MCF 10A (cell line): ENCODE measurements at regions of chr11 and their contacts with region 1.

Region 1: DNA sequence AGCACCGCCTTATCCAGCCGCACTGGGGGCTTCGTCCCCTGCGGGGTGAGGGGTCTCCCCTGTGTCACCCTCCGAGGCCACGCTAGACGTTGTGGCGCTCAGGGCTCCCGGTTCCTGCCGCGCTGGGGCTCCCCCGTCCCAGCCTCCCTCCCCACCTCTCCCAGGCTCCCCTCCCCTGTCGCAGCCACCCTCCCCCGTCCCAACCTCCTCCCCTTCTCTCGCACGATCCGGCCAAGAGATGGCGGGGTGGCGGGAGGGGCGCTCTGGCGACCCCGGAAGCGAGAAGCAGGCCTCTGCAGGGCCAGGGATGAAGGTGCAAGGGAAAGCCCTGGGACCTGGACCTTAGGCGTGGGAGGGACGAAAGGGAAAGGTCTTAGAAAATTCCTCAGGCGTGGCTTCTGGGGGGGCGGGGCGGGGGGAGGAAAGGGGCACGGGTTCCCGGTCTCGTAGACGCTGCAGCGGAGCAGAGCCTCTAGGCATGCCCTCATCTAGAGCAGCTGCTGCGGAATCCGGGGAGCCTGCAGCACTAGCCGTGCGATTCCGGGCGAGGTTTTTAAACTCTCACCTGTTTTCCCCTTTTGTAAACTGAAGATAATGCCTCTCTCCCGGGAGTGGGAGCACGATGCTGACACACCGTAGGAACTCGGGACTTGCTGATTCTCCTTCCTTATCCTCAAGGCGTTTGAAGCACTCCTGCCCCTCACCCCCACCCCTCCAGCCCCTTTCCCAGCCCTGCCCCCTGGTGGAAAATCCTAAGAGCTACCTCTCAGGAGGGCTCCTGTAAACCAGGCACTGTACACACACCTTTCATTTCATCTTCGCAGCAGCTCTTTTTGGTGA is 14.4 kb downstream of the KCNJ5 start:
- DNase-seq: peak; percentile 71
- H3K4me3 Mint-ChIP-seq: peak overlapping the region; percentile 72
- H3K27ac Mint-ChIP-seq: peak overlapping the region; percentile 57
- H3K4me1 Mint-ChIP-seq: peaks cover 48% of the 10 kb centered on the region
- H3K27me3 Mint-ChIP-seq: no peaks in the 10 kb centered on the region
- CTCF ChIP-seq: peak; percentile 43

Region 2: GRCh38 chr11:128802358-128802981 is 103.1 kb before region 1 on chr11:
- CTCF ChIA-PET with region 1: no interaction called
- POLR2A ChIA-PET with region 1: no interaction called
- intact Hi-C with region 1: no loop called
- DNase-seq: peak; percentile 30
- H3K4me3 Mint-ChIP-seq: no peak overlapping the region
- H3K27ac Mint-ChIP-seq: no peak overlapping the region
- H3K4me1 Mint-ChIP-seq: peaks cover 6% of the 10 kb centered on the region
- H3K27me3 Mint-ChIP-seq: no peaks in the 10 kb centered on the region
- CTCF ChIP-seq: peak; percentile 25

Region 3: GRCh38 chr11:128893578-128894285 is 11.8 kb before region 1 on chr11:
- CTCF ChIA-PET with region 1: interaction called, 54 read pairs
- POLR2A ChIA-PET with region 1: interaction called, 16 read pairs
- intact Hi-C with region 1: no loop called
- DNase-seq: no peak
- H3K4me3 Mint-ChIP-seq: no peak overlapping the region
- H3K27ac Mint-ChIP-seq: no peak overlapping the region
- H3K4me1 Mint-ChIP-seq: peaks cover 15% of the 10 kb centered on the region
- H3K27me3 Mint-ChIP-seq: no peaks in the 10 kb centered on the region
- CTCF ChIP-seq: no peak

Region 4: DNA sequence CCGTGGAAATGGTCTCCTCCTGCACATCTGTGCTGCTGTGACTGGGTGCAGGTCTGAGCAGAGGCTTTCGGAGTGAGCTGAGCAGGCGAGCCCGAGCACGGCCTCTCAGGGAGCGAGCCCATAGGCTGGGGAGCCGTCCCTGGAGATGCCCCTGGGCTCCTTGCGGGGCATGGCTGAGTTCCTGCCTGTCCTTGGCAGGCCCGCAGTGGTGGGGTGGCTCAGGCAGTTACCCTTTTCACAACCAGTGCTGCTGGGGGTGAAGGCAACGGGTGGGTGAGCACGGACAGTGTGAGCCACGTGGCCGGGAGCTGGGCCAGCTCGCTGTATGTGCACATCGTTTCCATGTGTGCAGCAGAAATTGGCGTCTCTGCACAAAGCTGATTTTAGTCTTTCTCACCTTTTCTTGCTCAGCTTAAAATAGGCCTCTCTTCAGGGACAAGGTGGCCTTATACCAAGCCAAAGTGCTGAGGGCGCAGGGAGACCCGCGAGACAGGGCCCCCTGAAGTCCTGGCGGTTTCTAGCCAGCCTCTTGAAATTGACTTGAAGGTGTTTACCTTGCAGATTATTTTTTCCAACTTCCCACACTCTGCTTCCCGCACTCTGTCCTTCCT is 37.4 kb after region 1 on chr11 and contains the start of gene TP53AIP1:
- CTCF ChIA-PET with region 1: interaction called, 18 read pairs
- POLR2A ChIA-PET with region 1: interaction called, 14 read pairs
- intact Hi-C with region 1: no loop called
- DNase-seq: no peak
- H3K4me3 Mint-ChIP-seq: no peak within 1 kb of the TSS
- H3K27ac Mint-ChIP-seq: peak within 1 kb of the TSS; percentile 86
- H3K4me1 Mint-ChIP-seq: peaks cover 22% of the 10 kb centered on the region
- H3K27me3 Mint-ChIP-seq: no peaks in the 10 kb centered on the region
- CTCF ChIP-seq: no peak
- total RNA-seq, gene TP53AIP1: 4.5 and 5.8 TPM in 2 replicates

Region 5: DNA sequence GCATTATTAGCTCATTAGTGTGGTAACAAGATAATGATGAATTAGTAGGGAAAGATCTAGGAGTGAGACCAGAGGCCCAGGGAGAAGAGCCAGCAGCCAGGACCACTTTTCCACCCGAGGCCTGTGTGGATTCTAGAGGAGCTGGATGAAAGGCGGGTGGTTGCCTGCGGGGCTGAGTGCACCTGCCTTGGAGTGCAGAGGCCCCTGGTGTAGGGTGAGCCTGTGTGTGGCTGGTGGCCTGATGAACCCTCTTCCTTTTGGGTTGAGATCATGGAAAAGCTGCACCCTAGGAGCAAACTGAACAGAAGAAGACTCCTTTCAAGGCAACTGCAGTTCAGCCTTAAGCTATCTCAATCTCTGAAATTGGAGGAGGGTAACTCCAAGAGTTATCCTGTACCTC is 43.0 kb after region 1 on chr11:
- CTCF ChIA-PET with region 1: interaction called, 4 read pairs
- POLR2A ChIA-PET with region 1: interaction called, 13 read pairs
- intact Hi-C with region 1: no loop called
- DNase-seq: peak; percentile 23
- H3K4me3 Mint-ChIP-seq: no peak overlapping the region
- H3K27ac Mint-ChIP-seq: no peak overlapping the region
- H3K4me1 Mint-ChIP-seq: no peaks in the 10 kb centered on the region
- H3K27me3 Mint-ChIP-seq: no peaks in the 10 kb centered on the region
- CTCF ChIP-seq: no peak

Region 6: GRCh38 chr11:129163714-129164164 is 258.2 kb after region 1 on chr11:
- CTCF ChIA-PET with region 1: no interaction called
- POLR2A ChIA-PET with region 1: no interaction called
- intact Hi-C with region 1: no loop called
- DNase-seq: no peak
- H3K4me3 Mint-ChIP-seq: no peak overlapping the region
- H3K27ac Mint-ChIP-seq: no peak overlapping the region
- H3K4me1 Mint-ChIP-seq: peaks cover 14% of the 10 kb centered on the region
- H3K27me3 Mint-ChIP-seq: no peaks in the 10 kb centered on the region
- CTCF ChIP-seq: no peak